Posterior vena cava (tissue), 2 donors: ENCODE measurements at regions of chr6 and their contacts with region 1.

Region 1: DNA sequence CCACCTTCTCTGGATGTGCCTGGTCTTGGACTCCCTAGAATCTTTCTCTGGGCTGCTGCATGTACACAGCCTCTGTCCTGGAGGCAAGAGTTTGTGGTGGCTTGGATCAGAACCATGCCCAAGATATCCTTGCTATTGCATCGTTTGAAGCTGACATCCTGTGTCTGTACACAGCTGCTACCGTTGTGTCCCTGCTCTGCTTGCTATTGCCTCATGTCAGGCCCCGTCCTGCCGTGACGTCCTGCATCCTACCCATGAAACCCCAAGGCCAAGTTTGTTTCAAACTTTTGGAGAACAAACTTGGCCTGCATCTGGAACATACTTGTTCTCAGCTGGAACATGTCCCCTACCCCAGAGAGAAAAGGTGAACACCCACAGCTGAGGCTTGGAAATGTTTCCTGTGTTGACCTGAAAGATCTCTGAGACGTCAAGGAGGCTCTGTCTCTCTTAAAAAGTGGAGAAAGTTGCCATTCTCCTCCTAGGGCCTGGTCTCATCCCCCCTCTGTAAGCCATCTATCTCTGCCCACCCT is 78.1 kb downstream of the HFE start:
- DNase-seq: no peak

Region 2: GRCh38 chr6:26129656-26130055 is 35.7 kb before region 1 on chr6:
- intact Hi-C with region 1: loop called in 1 of 2 experiments (anchors 5 kb)
- DNase-seq: no peak